CD4-positive, alpha-beta memory T cell (primary cell): ENCODE measurements at regions of chr6 and their contacts with region 1.

Region 1: GRCh38 chr6:30102970-30103874 is 9.7 kb downstream of the TRIM31 start:
- DNase-seq: peak; percentile 82 to 84 (median 83)
- H3K4me3 ChIP-seq: peak overlapping the region; percentile 19 to 48
- H3K4me3 Mint-ChIP-seq: peak overlapping the region; percentile 84 to 94 (median 90)
- H3K27ac ChIP-seq: peak overlapping the region; percentile 20
- H3K27ac Mint-ChIP-seq: peak overlapping the region; percentile 61 to 93 (median 76)
- H3K4me1 ChIP-seq: peaks cover 37% of the 10 kb centered on the region
- H3K4me1 Mint-ChIP-seq: peaks cover 26 to 48% (median 38%) of the 10 kb centered on the region in 4 donors
- H3K27me3 ChIP-seq: peaks cover 13% of the 10 kb centered on the region
- H3K27me3 Mint-ChIP-seq: peaks cover 25 to 28% of the 10 kb centered on the region in 2 donors

Region 2: DNA sequence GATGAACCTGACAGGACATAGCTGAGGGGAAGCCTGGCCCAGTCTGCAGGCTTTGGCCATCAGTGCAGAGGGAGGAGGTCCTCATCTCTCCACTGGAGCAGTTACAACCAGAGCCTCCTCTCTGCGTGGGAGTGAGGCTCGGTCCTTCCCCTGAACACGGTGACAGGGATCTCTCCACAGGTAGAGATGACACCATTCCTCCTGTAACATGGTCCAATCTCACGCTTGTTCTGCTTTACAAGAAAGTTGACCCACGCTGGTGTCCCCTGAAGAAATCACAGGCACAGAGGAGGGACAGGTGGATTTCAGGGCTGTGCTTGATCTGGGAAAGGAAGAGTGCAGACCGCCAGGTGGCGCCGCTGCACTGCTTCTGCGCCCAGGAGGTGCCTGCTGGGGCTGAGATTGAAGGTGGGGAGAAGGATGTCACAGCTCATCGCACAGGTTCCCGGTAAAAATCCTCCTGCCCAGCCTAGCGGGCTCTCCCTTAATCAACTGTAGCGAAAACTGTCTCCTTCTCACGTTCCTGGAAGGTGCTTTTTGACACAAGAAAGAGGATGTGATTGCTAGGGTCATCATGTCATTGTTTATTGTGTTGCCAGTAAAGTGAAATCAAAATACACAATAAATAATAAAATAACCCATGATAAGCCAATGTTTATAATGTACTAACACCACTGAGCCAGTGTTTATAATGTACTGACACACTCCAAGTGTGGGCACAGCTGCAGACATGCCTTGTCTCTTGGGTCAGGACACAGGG is 255.2 kb before region 1 on chr6:
- CTCF ChIA-PET with region 1: interaction called, 6 read pairs
- POLR2A ChIA-PET with region 1: no interaction called
- intact Hi-C with region 1: loop called (anchors 1 kb)
- DNase-seq: peak; percentile 73 to 83 (median 79)
- H3K4me3 ChIP-seq: no peak overlapping the region
- H3K4me3 Mint-ChIP-seq: peak overlapping the region in 2 of 8 donors; percentile 29 to 61
- H3K27ac ChIP-seq: no peak overlapping the region
- H3K27ac Mint-ChIP-seq: no peak overlapping the region
- H3K4me1 ChIP-seq: no peaks in the 10 kb centered on the region
- H3K4me1 Mint-ChIP-seq: peaks cover 9 to 16% (median 14%) of the 10 kb centered on the region in 4 donors
- H3K27me3 ChIP-seq: peaks cover 22% of the 10 kb centered on the region
- H3K27me3 Mint-ChIP-seq: peaks cover 25 to 47% of the 10 kb centered on the region in 2 donors

Region 3: GRCh38 chr6:30066577-30067459 is 36.4 kb before region 1 on chr6 and contains the start of gene PPP1R11:
- CTCF ChIA-PET with region 1: interaction called, 29 read pairs
- POLR2A ChIA-PET with region 1: interaction called, 31 read pairs
- intact Hi-C with region 1: no loop called
- DNase-seq: peak; percentile 98 to 100 (median 99)
- H3K4me3 ChIP-seq: peak within 1 kb of the TSS; percentile 84 to 90
- H3K4me3 Mint-ChIP-seq: peak within 1 kb of the TSS; percentile 92 to 100 (median 97)
- H3K27ac ChIP-seq: peak within 1 kb of the TSS; percentile 99
- H3K27ac Mint-ChIP-seq: peak within 1 kb of the TSS; percentile 95 to 100 (median 99)
- H3K4me1 ChIP-seq: peaks cover 50% of the 10 kb centered on the region
- H3K4me1 Mint-ChIP-seq: peaks cover 35 to 75% (median 52%) of the 10 kb centered on the region in 4 donors
- H3K27me3 ChIP-seq: no peaks in the 10 kb centered on the region
- H3K27me3 Mint-ChIP-seq: peaks cover 4 to 6% of the 10 kb centered on the region in 2 donors
- total RNA-seq, gene PPP1R11: 65.2 to 66.2 TPM

Region 4: GRCh38 chr6:30122515-30122914 is 19.3 kb after region 1 on chr6:
- CTCF ChIA-PET with region 1: interaction called, 52 read pairs
- POLR2A ChIA-PET with region 1: no interaction called
- intact Hi-C with region 1: no loop called
- DNase-seq: no peak
- H3K4me3 ChIP-seq: no peak overlapping the region
- H3K4me3 Mint-ChIP-seq: no peak overlapping the region
- H3K27ac ChIP-seq: no peak overlapping the region
- H3K27ac Mint-ChIP-seq: no peak overlapping the region
- H3K4me1 ChIP-seq: no peaks in the 10 kb centered on the region
- H3K4me1 Mint-ChIP-seq: peaks cover 0 to 5% (median 0%) of the 10 kb centered on the region in 4 donors
- H3K27me3 ChIP-seq: peaks cover 3% of the 10 kb centered on the region
- H3K27me3 Mint-ChIP-seq: peaks cover 20 to 27% of the 10 kb centered on the region in 2 donors

Region 5: DNA sequence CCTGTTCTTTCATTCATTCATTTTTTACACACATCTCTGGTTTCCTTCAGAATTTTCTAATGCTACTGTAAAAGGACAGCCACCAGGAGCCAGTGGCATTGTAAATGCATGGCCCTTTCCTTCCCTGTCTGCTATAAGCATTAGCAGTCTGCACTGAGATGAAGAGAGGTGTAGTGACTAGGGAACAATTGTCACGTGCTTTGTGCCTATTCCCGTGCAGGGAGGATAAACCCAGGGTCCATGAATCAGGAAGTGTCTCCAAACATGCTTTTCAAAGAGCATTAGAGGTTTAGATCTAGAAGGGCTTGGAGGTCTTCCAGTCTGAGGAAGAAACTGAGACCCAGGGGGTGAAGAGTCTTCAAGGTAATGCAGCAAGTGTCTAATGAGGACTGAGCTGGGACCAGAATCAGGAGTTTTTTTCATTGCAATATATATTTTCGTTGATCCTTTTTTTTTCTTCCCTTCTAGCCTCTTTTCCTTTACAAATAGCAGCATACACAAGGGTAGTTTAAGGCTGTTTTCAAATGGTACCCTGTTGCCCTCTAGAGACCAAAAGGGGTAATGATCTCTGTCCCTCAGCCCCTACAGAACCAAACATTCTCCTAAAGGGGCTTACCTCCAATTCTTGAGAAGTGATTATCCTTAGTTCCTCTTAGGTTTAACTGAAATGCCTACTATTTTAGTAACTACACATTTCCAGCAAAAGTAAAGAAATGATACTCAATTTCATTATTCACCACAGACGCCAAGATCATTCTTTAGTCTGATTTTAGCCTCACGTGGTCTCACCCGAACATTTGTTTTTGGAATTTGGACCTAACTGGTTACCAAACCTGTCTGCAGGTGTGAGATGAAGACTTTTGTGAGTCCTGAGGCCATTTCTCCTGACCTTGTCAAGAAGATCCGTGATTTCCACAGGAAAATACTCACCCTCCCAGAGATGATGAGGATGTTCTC is 66.7 kb after region 1 on chr6:
- CTCF ChIA-PET with region 1: interaction called, 4 read pairs
- POLR2A ChIA-PET with region 1: no interaction called
- intact Hi-C with region 1: loop called (anchors 1 kb)
- DNase-seq: peak in 4 of 5 donors; percentile 26 to 35 (median 32)
- H3K4me3 ChIP-seq: no peak overlapping the region
- H3K4me3 Mint-ChIP-seq: no peak overlapping the region
- H3K27ac ChIP-seq: no peak overlapping the region
- H3K27ac Mint-ChIP-seq: no peak overlapping the region
- H3K4me1 ChIP-seq: peaks cover 7% of the 10 kb centered on the region
- H3K4me1 Mint-ChIP-seq: peaks cover 3 to 16% (median 11%) of the 10 kb centered on the region in 4 donors
- H3K27me3 ChIP-seq: peaks cover 15% of the 10 kb centered on the region
- H3K27me3 Mint-ChIP-seq: peaks cover 26 to 36% of the 10 kb centered on the region in 2 donors